ENCODE measurements at regions of chr16 and their contacts with region 1.

Region 1: DNA sequence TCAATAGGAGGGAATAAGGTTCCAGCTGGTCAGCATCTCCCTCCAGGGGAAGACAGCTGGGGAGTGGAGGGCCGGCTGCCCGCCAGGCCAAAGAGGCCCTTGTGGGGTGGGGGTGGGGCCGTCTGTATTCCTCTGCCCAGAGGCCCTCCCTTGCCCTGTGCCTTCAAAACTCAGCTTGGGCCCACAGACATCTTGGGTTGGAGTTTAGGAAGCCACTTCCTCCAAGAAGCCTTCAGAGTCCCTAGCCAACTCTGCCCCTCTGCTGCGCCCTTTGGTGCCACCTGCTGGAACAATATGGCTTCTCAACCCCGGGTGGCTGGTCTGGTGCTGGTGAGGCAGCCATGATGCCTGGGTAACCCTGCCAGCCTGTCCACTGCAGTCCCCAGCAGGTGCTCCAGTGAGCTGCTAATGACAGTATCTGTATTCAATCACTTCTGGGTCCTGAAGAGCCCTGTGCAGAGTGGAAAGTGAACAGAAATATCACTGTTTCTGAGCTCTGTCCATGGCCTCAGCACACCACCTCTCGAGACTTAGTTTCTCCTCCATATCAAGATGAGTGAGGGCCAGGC is 16.7 kb downstream of the HSD11B2 start:
- DNase-seq: peak; percentile 80
- H3K4me3 Mint-ChIP-seq: no peak overlapping the region
- H3K27ac Mint-ChIP-seq: no peak overlapping the region
- H3K4me1 Mint-ChIP-seq: peaks cover 6% of the 10 kb centered on the region
- H3K27me3 Mint-ChIP-seq: no peaks in the 10 kb centered on the region

Region 2: GRCh38 chr16:67428146-67428731 is 19.4 kb before region 1 on chr16:
- CTCF ChIA-PET with region 1: interaction called, 29 read pairs
- POLR2A ChIA-PET with region 1: no interaction called
- DNase-seq: peak; percentile 64
- H3K4me3 Mint-ChIP-seq: no peak overlapping the region
- H3K27ac Mint-ChIP-seq: no peak overlapping the region
- H3K4me1 Mint-ChIP-seq: peaks cover 8% of the 10 kb centered on the region
- H3K27me3 Mint-ChIP-seq: peaks cover 50% of the 10 kb centered on the region

Region 3: GRCh38 chr16:67435758-67436164 is 11.8 kb before region 1 on chr16:
- CTCF ChIA-PET with region 1: interaction called, 19 read pairs
- POLR2A ChIA-PET with region 1: no interaction called
- DNase-seq: no peak
- H3K4me3 Mint-ChIP-seq: no peak overlapping the region
- H3K27ac Mint-ChIP-seq: no peak overlapping the region
- H3K4me1 Mint-ChIP-seq: peaks cover 3% of the 10 kb centered on the region
- H3K27me3 Mint-ChIP-seq: peaks cover 11% of the 10 kb centered on the region

Region 4: GRCh38 chr16:67461600-67462592 is 14.3 kb after region 1 on chr16:
- CTCF ChIA-PET with region 1: interaction called, 22 read pairs
- POLR2A ChIA-PET with region 1: no interaction called
- DNase-seq: no peak
- H3K4me3 Mint-ChIP-seq: no peak overlapping the region
- H3K27ac Mint-ChIP-seq: no peak overlapping the region
- H3K4me1 Mint-ChIP-seq: peaks cover 8% of the 10 kb centered on the region
- H3K27me3 Mint-ChIP-seq: no peaks in the 10 kb centered on the region